Right ventricle myocardium inferior (tissue), 1 donor: ENCODE measurements at regions of chr2 and their contacts with region 1.

Region 1: GRCh38 chr2:111897924-111898702 is at the start of gene MERTK:
- DNase-seq: peak; percentile 93
- ATAC-seq: peak; percentile 94
- total RNA-seq, gene MERTK: 6.6 TPM

Region 2: DNA sequence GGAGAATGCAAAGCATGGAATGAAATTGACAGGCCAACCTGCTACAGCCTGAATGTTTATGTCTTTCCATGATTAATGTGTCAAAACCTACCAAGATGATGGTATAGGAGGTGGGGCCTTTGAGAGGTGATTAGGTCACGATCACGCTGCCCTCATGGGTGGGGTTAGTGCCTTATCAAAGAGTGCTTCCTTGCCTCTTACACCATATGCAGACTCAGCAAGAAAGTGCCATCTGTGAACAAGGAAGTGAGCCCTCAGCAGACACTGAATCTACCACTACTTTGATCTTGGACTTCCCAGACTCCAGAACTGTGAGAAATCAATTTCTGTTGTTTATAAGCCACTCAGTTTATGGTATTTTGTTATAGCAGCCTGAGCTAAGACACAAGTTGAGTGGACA is 924.9 kb before region 1 on chr2:
- intact Hi-C with region 1: no loop called
- DNase-seq: no peak
- ATAC-seq: no peak

Region 3: DNA sequence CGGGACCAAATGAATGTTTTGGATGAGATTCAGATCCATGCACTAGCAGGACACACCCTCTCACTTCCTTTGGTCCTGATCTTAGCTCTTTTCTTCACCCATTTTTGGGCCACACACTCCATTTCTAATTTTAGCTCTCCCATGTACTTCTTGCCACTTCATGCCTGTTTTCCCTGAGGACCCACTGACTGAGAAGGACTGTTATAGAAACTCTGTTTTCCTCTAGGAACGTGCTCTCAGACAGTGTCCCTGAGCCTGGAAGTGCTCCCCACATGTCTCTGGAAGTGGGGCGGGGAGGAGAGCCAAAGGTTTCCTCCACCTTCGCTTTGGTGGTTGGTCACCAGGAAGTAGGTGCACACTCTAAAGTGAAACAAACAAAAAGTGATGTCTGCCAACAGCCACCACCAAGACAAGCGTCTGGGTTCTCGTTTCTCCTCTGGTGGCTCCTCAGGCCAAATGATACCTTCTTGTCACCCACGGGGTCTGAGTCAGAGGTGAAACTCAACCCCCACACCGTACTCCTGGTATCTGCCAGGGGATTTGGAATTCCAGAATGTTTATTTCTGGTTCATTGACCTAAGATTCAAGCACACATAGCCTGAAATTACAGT is 74.9 kb after region 1 on chr2:
- intact Hi-C with region 1: loop called (anchors 5 kb)
- DNase-seq: no peak
- ATAC-seq: peak; percentile 62

Region 4: GRCh38 chr2:112048887-112049286 is 150.8 kb after region 1 on chr2:
- intact Hi-C with region 1: loop called (anchors 1 kb)
- DNase-seq: no peak
- ATAC-seq: peak; percentile 74